PC-3 (cell line): ENCODE measurements at regions of chr6 and their contacts with region 1.

Region 1: DNA sequence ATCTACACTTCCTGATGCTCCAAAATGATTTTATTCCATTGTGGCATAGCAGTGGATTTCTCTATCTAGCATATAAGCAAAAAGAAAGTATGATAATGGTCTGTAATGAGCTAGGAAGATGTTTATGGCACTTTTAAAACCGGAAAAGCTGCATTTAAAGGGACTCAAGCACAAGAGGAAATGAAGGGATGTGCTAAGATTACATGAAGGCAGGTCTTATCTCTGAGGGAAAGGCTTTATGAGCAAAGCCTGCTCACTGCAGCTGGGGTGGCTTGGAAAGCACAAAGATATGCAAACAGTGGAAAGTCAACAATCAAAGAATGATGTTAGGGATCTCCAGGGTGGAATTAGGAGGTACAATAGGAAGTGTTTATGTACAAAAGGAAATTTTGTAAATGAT is 138.2 kb downstream of the TENT5A start:
- DNase-seq: peak; percentile 56
- ATAC-seq: peak; percentile 90
- H3K4me3 ChIP-seq: no peak overlapping the region
- H3K27ac ChIP-seq: peak overlapping the region; percentile 64
- H3K4me1 ChIP-seq: peaks cover 18% of the 10 kb centered on the region
- H3K27me3 ChIP-seq: no peaks in the 10 kb centered on the region
- CTCF ChIP-seq: no peak

Region 2: GRCh38 chr6:81648502-81648901 is 34.2 kb after region 1 on chr6:
- CTCF ChIA-PET with region 1: no interaction called
- POLR2A ChIA-PET with region 1: no interaction called
- intact Hi-C with region 1: loop called (anchors 5 kb)
- DNase-seq: no peak
- ATAC-seq: no peak
- H3K4me3 ChIP-seq: no peak overlapping the region
- H3K27ac ChIP-seq: no peak overlapping the region
- H3K4me1 ChIP-seq: no peaks in the 10 kb centered on the region
- H3K27me3 ChIP-seq: no peaks in the 10 kb centered on the region
- CTCF ChIP-seq: no peak